Body of pancreas (tissue), 4 donors: ENCODE measurements at regions of chr12 and their contacts with region 1.

Region 1: DNA sequence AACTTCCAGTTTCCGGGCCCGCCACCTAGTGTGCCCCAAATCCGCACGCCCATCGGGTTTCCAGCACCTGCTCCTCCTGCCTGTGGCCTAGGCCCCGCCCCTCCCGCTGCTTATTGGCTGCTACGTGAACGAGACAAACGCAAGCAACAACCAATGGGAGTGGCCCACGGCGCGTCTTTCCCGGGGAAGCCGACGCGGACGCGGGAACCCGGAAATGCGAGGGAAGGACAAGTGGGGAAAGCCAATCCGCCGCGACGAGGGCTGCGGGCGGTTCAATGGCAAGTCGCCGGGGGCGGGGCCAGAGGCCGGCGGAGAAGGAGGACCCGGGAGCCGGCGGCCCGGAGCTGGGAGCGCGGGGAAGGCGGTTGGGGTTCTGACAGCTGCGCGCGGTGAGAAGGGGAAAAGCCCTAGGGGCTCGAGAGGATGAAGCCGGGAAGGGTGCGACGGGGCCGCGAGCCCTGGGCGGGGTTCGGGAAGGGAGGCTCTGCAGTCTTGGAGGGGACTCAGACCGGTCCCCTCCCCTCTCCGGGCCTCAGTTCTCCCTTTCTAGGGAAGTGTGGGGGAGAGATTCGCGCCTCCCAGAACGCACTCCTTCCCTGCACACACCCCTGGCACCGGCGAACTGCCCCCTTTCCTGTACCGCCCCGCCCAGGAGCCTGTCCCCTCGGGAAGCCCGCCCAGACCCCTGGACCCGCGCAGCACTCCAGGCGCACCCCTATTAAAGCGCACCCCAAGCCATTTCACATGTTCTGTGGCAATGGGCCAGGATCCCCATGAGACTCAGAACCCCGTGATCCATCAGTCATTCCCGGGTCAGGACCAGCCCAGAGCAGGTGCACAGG is at the start of gene FICD:
- DNase-seq: peak; percentile 100
- ATAC-seq: peak; percentile 99
- H3K4me3 ChIP-seq: peak within 1 kb of the TSS; percentile 74 to 87
- H3K27ac ChIP-seq: peak within 1 kb of the TSS; percentile 46 to 86 (median 82)
- H3K4me1 ChIP-seq: peaks cover 30% of the 10 kb centered on the region
- H3K27me3 ChIP-seq: no peaks in the 10 kb centered on the region
- CTCF ChIP-seq: no peak
- POLR2A ChIP-seq: peak; percentile 60 to 82 (median 76)
- total RNA-seq, gene FICD: 10.9 to 11.9 TPM

Region 2: GRCh38 chr12:108559748-108560147 is 44.6 kb after region 1 on chr12:
- intact Hi-C with region 1: loop called (anchors 5 kb)
- DNase-seq: no peak
- ATAC-seq: no peak
- H3K4me3 ChIP-seq: peak overlapping the region in 1 of 2 donors; percentile 93
- H3K27ac ChIP-seq: no peak overlapping the region
- H3K4me1 ChIP-seq: peaks cover 41% of the 10 kb centered on the region
- H3K27me3 ChIP-seq: no peaks in the 10 kb centered on the region
- CTCF ChIP-seq: no peak
- POLR2A ChIP-seq: no peak

Region 3: GRCh38 chr12:108685469-108686260 is 170.5 kb after region 1 on chr12:
- intact Hi-C with region 1: no loop called
- DNase-seq: no peak
- ATAC-seq: no peak
- H3K4me3 ChIP-seq: no peak overlapping the region
- H3K27ac ChIP-seq: no peak overlapping the region
- H3K4me1 ChIP-seq: peaks cover 24% of the 10 kb centered on the region
- H3K27me3 ChIP-seq: no peaks in the 10 kb centered on the region
- CTCF ChIP-seq: no peak
- POLR2A ChIP-seq: no peak

Region 4: DNA sequence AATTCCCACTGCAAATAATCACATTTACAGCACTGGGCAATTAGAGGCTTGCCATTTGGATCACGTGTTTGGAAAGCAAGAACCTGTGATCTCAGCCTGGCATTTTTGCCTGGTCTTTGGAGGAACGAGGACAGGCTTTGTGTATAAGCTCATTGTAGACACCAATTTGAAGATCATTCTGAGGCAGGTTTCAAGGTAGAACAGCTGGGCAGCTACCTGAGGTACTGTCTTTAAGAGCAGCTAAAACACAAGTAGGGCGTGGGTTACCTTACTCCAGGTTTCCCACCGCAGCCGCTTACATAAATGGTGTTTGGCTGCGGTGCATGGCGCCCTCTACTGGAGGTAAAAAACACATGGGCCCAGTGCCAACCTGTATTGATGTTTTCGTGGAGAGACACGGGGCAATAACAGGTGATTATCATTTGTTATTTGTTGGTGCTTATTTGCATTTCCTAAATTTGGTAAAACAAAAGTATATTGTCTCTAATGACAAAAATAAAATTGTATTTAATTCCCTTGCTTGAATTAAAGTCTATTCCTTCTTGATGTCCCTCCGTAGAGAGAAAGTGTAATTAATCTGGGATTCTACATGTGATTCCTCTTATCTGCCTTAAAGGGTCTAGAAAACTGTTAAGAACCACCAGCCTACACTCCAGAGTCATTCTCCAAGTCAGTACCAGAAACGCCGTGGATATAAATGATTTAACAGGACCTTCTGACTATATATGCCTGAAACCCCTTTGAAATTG is 436.0 kb after region 1 on chr12:
- intact Hi-C with region 1: no loop called
- DNase-seq: peak; percentile 75 to 86 (median 79)
- ATAC-seq: peak; percentile 83
- H3K4me3 ChIP-seq: no peak overlapping the region
- H3K27ac ChIP-seq: no peak overlapping the region
- H3K4me1 ChIP-seq: peaks cover 8% of the 10 kb centered on the region
- H3K27me3 ChIP-seq: no peaks in the 10 kb centered on the region
- CTCF ChIP-seq: peak; percentile 74 to 94 (median 86)
- POLR2A ChIP-seq: no peak